ENCODE measurements at regions of chr10 and their contacts with region 1.

Region 1: DNA sequence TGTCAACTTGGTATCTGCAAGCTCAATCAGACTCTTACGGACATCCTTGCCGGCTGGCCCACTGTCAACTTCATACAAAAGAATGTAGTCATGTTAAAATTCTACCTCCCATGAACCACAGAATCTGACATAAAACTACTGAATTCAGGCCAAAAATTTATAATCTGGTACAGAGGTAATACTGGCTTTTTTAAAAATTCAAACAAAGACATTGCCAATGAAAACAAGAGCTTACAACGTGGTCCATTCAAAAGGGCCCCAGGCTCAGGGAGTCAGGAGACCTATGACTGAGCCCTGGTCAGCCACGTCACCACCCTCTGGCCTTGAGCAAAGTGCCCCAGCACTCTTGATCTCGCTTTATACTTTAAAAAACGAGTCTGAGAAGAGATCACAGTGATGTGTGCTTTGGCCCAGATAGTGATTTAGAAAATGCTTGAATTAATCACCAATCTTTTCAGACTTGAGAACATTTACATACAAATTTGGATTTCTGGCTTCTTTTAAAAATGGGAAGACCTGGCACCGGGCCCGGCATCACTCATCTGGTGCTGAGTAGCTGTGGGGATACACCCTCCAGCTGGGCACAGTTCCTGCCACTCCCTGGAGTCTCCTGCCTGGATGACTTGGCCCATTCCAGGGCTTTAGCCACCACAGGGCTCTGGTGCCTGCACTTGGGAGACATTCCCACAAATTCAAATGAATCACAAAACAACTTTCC is 94.1 kb downstream of the PIP4K2A start:
- DNase-seq: peak; percentile 91
- H3K4me3 ChIP-seq: no peak overlapping the region
- H3K27ac ChIP-seq: peak overlapping the region; percentile 81
- H3K4me1 ChIP-seq: peaks cover 66% of the 10 kb centered on the region
- H3K27me3 ChIP-seq: no peaks in the 10 kb centered on the region
- CTCF ChIP-seq: no peak
- POLR2A ChIP-seq: no peak

Region 2: DNA sequence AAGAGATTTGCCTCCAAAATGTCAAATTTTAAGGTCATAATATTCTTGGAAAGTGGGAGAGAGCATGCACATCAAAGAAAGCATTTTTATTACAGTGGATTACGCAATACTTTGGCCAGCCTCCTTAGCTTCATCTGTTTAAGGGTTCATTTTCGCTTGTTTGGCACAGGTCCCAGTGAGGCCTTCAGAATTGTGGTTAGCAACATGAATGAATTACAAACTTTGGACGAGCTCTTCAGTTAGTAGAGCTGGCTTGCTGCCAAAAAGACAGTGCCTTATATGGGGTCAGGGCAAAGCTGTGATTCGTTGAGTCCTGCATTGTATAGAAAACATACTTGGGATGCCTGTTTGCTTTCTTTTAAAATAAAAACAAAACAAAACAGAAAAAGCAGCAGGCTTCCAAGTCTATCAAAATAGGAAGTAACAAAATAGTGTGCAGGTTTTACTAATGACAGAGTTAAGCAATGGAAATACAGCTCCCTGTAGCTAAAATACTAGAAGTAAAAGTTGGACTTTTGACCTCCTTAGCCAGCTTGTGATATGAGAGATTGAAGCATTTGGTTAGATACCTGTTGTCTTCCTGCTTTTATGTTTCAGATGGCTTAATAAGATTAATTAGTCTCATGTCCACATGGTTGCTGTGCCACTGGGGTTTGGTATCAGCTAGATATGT is 895.5 kb before region 1 on chr10:
- CTCF ChIA-PET with region 1: no interaction called
- POLR2A ChIA-PET with region 1: no interaction called
- dilution Hi-C with region 1: no loop called
- intact Hi-C with region 1: loop called (anchors 5 kb)
- DNase-seq: peak; percentile 97
- H3K4me3 ChIP-seq: no peak overlapping the region
- H3K27ac ChIP-seq: no peak overlapping the region
- H3K4me1 ChIP-seq: peaks cover 34% of the 10 kb centered on the region
- H3K27me3 ChIP-seq: no peaks in the 10 kb centered on the region
- CTCF ChIP-seq: no peak
- POLR2A ChIP-seq: no peak

Region 3: GRCh38 chr10:22631646-22632278 is 11.5 kb after region 1 on chr10:
- CTCF ChIA-PET with region 1: interaction called, 8 read pairs
- POLR2A ChIA-PET with region 1: interaction called, 3 read pairs
- dilution Hi-C with region 1: no loop called
- intact Hi-C with region 1: loop called (anchors 1 kb)
- DNase-seq: peak; percentile 81
- H3K4me3 ChIP-seq: peak overlapping the region in 1 of 3 experiments; percentile 34
- H3K27ac ChIP-seq: peak overlapping the region; percentile 78
- H3K4me1 ChIP-seq: peaks cover 31% of the 10 kb centered on the region
- H3K27me3 ChIP-seq: no peaks in the 10 kb centered on the region
- CTCF ChIP-seq: no peak
- POLR2A ChIP-seq: no peak

Region 4: DNA sequence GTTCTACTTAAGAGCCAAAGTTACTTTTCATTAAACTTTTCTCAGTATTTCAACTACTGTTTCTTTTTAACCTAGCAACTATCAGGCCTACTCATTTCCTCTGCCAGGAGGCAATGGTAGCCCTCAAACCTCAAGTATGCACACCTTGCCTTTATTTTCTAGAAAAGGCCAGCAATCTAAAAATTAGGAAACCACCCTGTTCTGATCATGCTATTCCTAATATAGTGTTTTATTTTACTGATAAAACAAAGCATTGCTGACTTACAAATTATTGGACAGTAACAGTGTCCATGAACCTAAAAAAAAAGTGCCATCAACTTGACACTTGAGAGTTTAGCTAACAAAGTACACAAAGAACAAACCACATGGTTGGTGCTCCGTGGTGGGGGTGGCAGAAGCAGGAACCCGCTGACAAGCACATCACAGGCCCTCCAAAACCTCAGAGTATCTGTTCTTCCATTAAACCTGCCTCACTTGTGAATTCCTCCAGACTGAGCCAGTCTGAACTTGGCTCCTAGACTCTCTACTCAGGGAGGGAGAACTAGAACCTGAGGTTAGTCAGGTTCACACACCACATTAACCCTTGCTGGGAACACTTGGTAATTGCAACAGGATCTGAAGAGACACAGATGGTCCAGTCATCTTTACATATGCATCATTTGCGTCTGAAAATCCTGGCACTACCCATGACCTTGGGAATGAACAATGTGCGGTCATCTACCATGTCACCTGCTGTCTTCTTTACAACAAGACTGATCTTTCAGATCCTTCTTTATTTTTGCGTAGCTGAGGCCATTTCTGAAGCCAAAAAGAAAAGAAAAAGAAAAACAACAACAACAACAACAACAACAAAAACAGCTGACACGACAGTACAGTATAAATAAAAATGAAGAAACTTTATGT is 62.2 kb after region 1 on chr10:
- CTCF ChIA-PET with region 1: no interaction called
- POLR2A ChIA-PET with region 1: no interaction called
- dilution Hi-C with region 1: no loop called
- intact Hi-C with region 1: loop called (anchors 2 kb)
- DNase-seq: no peak
- H3K4me3 ChIP-seq: no peak overlapping the region
- H3K27ac ChIP-seq: peak overlapping the region; percentile 49
- H3K4me1 ChIP-seq: peaks cover 23% of the 10 kb centered on the region
- H3K27me3 ChIP-seq: no peaks in the 10 kb centered on the region
- CTCF ChIP-seq: no peak
- POLR2A ChIP-seq: no peak

Region 5: DNA sequence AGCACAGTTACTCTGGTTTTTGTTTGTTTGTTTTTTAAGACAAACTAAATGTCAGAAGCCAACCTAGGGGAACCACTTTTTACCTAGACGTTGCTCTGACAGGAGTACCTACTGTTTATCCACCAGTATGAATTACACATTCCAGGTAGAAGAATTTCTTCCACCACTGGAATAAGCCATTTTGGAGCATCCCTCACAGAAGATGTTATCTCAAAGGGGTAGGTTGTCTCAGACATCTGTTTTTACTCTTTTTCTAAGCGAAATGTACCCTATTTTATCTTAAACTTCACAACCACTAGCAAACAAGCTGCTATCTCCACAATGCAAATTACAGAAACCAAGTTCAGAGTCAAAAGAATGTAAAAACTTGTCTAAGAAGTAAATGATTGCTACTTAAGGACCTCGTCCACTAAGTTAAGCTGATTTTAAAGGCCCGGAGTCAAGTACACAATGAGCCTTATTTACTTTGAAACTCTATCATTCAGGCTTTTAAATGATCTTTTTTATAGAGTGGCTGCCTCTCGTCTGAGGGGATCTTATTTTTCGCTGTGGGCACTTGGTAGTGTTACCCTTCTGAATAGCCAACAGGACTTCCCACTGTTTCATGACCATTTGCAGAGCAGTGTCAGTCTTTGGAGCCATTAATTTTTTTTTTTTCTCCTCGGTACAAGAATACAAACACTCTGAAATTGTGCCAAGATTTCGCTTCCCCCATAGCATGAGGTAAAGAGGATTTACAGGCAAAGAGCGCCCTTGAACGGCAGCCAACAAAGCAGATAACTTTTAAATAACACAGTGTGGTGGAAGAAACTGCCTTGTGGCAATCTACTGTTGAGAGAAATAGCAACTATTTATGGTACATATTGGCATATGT is 291.8 kb after region 1 on chr10:
- CTCF ChIA-PET with region 1: no interaction called
- POLR2A ChIA-PET with region 1: no interaction called
- dilution Hi-C with region 1: no loop called
- intact Hi-C with region 1: no loop called
- DNase-seq: peak; percentile 35
- H3K4me3 ChIP-seq: no peak overlapping the region
- H3K27ac ChIP-seq: no peak overlapping the region
- H3K4me1 ChIP-seq: no peaks in the 10 kb centered on the region
- H3K27me3 ChIP-seq: no peaks in the 10 kb centered on the region
- CTCF ChIP-seq: no peak
- POLR2A ChIP-seq: no peak

Region 6: GRCh38 chr10:22945934-22946673 is 325.8 kb after region 1 on chr10:
- CTCF ChIA-PET with region 1: no interaction called
- POLR2A ChIA-PET with region 1: no interaction called
- dilution Hi-C with region 1: no loop called
- intact Hi-C with region 1: no loop called
- DNase-seq: no peak
- H3K4me3 ChIP-seq: no peak overlapping the region
- H3K27ac ChIP-seq: no peak overlapping the region
- H3K4me1 ChIP-seq: no peaks in the 10 kb centered on the region
- H3K27me3 ChIP-seq: peaks cover 0 to 2% of the 10 kb centered on the region in 2 experiments
- CTCF ChIP-seq: no peak
- POLR2A ChIP-seq: no peak

Region 7: DNA sequence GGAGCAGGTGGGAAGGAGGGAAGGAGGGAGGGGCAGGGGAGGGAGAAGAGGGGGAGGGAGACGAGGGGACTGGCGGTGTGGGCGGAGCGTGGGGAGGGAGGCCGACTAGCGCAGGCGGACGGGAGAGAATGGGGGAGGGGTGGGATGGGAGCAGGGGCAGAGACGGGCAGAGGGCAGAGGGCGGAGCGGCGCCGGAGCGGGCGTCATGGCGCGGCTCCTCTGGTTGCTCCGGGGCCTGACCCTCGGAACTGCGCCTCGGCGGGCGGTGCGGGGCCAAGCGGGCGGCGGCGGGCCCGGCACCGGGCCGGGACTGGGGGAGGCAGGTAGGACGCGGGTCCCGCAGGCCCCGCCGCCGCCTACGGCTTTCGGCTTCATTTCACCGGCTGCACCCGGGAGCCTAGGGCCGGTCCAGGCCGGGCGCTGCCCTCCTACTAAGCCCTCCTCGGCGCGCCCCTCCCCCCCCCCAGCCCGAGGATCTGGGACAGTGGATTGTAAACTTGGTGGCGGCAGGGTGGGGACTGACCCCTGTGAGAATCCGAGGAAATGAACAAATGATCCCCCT is 475.2 kb after region 1 on chr10 and contains the start of gene MSRB2:
- CTCF ChIA-PET with region 1: no interaction called
- POLR2A ChIA-PET with region 1: no interaction called
- dilution Hi-C with region 1: no loop called
- intact Hi-C with region 1: loop called (anchors 10 kb)
- DNase-seq: peak; percentile 90
- H3K4me3 ChIP-seq: peak within 1 kb of the TSS; percentile 52 to 91 (median 84)
- H3K27ac ChIP-seq: peak within 1 kb of the TSS; percentile 25
- H3K4me1 ChIP-seq: peaks cover 18% of the 10 kb centered on the region
- H3K27me3 ChIP-seq: peaks cover 1 to 10% of the 10 kb centered on the region in 2 experiments
- CTCF ChIP-seq: no peak
- POLR2A ChIP-seq: peak; percentile 89
- total RNA-seq, gene MSRB2: 16.2 and 19.4 TPM in 2 replicates